PC-3 (cell line): ENCODE measurements at regions of chr1 and their contacts with region 1.

Region 1: GRCh38 chr1:28886731-28887418 is 27.5 kb upstream of the EPB41 start:
- DNase-seq: peak; percentile 92
- ATAC-seq: peak; percentile 73
- H3K4me3 ChIP-seq: peak overlapping the region; percentile 93
- H3K27ac ChIP-seq: no peak overlapping the region
- H3K4me1 ChIP-seq: peaks cover 17% of the 10 kb centered on the region
- H3K27me3 ChIP-seq: no peaks in the 10 kb centered on the region
- CTCF ChIP-seq: no peak

Region 2: GRCh38 chr1:28811766-28812668 is 74.9 kb before region 1 on chr1 and contains the start of gene OPRD1:
- CTCF ChIA-PET with region 1: no interaction called
- POLR2A ChIA-PET with region 1: no interaction called
- intact Hi-C with region 1: no loop called
- DNase-seq: no peak
- ATAC-seq: no peak
- H3K4me3 ChIP-seq: no peak within 1 kb of the TSS
- H3K27ac ChIP-seq: no peak within 1 kb of the TSS
- H3K4me1 ChIP-seq: no peaks in the 10 kb centered on the region
- H3K27me3 ChIP-seq: peaks cover 49% of the 10 kb centered on the region
- CTCF ChIP-seq: no peak
- total RNA-seq, gene OPRD1: not detected in 2 replicates

Region 3: DNA sequence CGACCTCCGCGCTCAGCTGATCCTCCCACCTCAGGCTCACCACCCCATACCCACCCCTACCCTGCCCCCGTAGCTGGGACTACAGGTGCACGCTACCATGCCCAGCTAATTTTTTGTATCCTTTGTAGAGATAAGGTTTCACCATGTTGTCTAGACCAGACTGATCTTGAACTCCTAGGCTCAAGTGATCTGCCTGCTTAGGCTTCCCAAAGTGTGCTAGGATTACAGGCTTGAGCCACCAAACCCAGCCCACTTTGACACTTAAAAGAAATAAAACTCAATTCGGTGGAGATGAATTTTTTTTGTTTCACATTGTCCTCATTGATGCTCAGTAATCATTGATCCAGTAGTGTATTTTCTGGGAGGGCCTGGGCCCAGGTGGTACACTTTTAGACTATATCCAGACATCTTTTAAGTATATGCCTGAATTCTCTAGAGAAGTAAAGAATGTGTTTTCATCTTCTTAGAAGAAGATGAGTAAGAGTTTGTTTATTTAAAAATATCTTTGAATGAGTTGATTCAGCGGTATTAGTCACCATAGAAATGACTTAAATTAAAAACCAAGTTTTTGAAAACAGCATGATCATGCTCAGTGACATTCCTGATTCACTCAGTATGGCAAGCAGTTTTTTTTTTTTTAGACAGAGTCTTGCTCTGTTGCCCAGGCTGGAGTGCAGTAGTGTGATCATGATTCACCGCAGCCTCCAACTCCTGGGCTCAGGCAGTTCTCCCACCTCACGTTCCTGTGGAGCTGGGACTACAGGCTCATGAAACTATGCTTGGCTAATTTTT is 85.3 kb after region 1 on chr1:
- CTCF ChIA-PET with region 1: no interaction called
- POLR2A ChIA-PET with region 1: no interaction called
- intact Hi-C with region 1: loop called (anchors 1 kb)
- DNase-seq: peak; percentile 94
- ATAC-seq: peak; percentile 88
- H3K4me3 ChIP-seq: no peak overlapping the region
- H3K27ac ChIP-seq: peak overlapping the region; percentile 82
- H3K4me1 ChIP-seq: peaks cover 32% of the 10 kb centered on the region
- H3K27me3 ChIP-seq: no peaks in the 10 kb centered on the region
- CTCF ChIP-seq: no peak

Region 4: GRCh38 chr1:29002792-29003191 is 115.9 kb after region 1 on chr1:
- CTCF ChIA-PET with region 1: no interaction called
- POLR2A ChIA-PET with region 1: no interaction called
- intact Hi-C with region 1: no loop called
- DNase-seq: peak; percentile 85
- ATAC-seq: peak; percentile 76
- H3K4me3 ChIP-seq: no peak overlapping the region
- H3K27ac ChIP-seq: peak overlapping the region; percentile 16
- H3K4me1 ChIP-seq: peaks cover 32% of the 10 kb centered on the region
- H3K27me3 ChIP-seq: no peaks in the 10 kb centered on the region
- CTCF ChIP-seq: no peak

Region 5: DNA sequence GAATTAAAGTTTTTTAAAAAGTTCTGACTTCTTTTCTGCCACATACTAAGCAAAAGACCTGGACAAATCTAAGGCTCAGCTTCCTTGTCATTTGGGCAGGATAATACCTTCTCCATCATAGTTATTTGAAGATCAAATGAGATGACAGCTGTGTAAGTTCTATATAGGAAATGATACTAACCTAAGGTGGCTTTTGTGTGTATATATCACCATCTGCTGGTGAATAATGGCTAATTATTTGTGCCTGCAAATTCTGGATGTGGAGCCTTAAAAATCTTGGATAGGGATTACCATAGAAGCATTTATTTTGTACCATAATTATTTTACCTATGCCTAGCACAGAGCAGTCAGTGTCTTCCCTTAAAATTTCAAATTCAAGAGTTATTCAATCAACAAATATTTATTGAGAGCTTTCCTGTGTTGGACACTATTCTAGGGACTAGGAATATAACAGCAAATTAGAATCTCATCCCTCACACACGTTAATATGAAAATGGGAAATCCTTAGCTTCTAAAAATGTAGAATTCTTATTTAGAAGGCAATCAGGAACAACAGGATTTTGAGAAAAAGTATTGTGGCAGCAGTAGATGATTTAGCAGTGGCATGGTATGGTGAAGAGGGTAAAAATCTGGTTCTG is 147.1 kb after region 1 on chr1:
- CTCF ChIA-PET with region 1: interaction called, 45 read pairs
- POLR2A ChIA-PET with region 1: interaction called, 16 read pairs
- intact Hi-C with region 1: loop called (anchors 1 kb)
- DNase-seq: peak; percentile 66
- ATAC-seq: peak; percentile 37
- H3K4me3 ChIP-seq: no peak overlapping the region
- H3K27ac ChIP-seq: no peak overlapping the region
- H3K4me1 ChIP-seq: no peaks in the 10 kb centered on the region
- H3K27me3 ChIP-seq: no peaks in the 10 kb centered on the region
- CTCF ChIP-seq: peak; percentile 87

Region 6: GRCh38 chr1:29145739-29146437 is 259.0 kb after region 1 on chr1:
- CTCF ChIA-PET with region 1: no interaction called
- POLR2A ChIA-PET with region 1: no interaction called
- intact Hi-C with region 1: loop called (anchors 10 kb)
- DNase-seq: peak; percentile 59
- ATAC-seq: peak; percentile 22
- H3K4me3 ChIP-seq: no peak overlapping the region
- H3K27ac ChIP-seq: peak overlapping the region; percentile 74
- H3K4me1 ChIP-seq: peaks cover 28% of the 10 kb centered on the region
- H3K27me3 ChIP-seq: no peaks in the 10 kb centered on the region
- CTCF ChIP-seq: no peak

Region 7: DNA sequence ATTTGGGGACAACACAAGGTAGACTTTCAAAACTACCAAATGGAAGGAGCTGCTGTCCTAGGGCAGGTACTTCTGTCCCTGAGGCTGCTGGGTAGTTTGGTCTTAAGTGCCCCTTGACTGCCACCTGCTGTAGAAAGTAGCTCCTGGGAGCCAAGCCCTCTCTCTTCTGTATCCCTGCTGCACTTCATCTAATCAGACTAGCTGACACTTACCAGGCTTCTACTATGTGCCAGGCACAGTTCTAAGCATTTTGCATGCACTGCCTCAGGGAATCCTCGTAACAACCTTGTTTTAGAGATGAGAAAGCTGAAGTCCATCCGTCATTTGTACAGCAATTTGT is 310.7 kb after region 1 on chr1:
- CTCF ChIA-PET with region 1: interaction called, 8 read pairs
- POLR2A ChIA-PET with region 1: interaction called, 11 read pairs
- intact Hi-C with region 1: loop called (anchors 1 kb)
- DNase-seq: peak; percentile 60
- ATAC-seq: peak; percentile 92
- H3K4me3 ChIP-seq: no peak overlapping the region
- H3K27ac ChIP-seq: no peak overlapping the region
- H3K4me1 ChIP-seq: peaks cover 12% of the 10 kb centered on the region
- H3K27me3 ChIP-seq: no peaks in the 10 kb centered on the region
- CTCF ChIP-seq: peak; percentile 67

Region 8: GRCh38 chr1:29202584-29203340 is 315.9 kb after region 1 on chr1:
- CTCF ChIA-PET with region 1: interaction called, 8 read pairs
- POLR2A ChIA-PET with region 1: interaction called, 11 read pairs
- intact Hi-C with region 1: loop called (anchors 1 kb)
- DNase-seq: peak; percentile 99
- ATAC-seq: peak; percentile 96
- H3K4me3 ChIP-seq: peak overlapping the region; percentile 36; the same call in 1 of the 2 replicates
- H3K27ac ChIP-seq: peak overlapping the region; percentile 42
- H3K4me1 ChIP-seq: peaks cover 17% of the 10 kb centered on the region
- H3K27me3 ChIP-seq: no peaks in the 10 kb centered on the region
- CTCF ChIP-seq: peak; percentile 96

Region 9: GRCh38 chr1:30707412-30708360 is 1820.8 kb after region 1 on chr1:
- CTCF ChIA-PET with region 1: no interaction called
- POLR2A ChIA-PET with region 1: no interaction called
- intact Hi-C with region 1: loop called (anchors 5 kb)
- DNase-seq: peak; percentile 77
- ATAC-seq: peak; percentile 93
- H3K4me3 ChIP-seq: no peak overlapping the region
- H3K27ac ChIP-seq: no peak overlapping the region
- H3K4me1 ChIP-seq: no peaks in the 10 kb centered on the region
- H3K27me3 ChIP-seq: peaks cover 8% of the 10 kb centered on the region; the same call in 1 of the 2 replicates
- CTCF ChIP-seq: peak; percentile 90